Activated T-helper 1 cell treated with anti-CD3 and anti-CD28 coated beads, Interleukin-12 subunit alpha, Interleukin-12 subunit beta, Interleukin-2, Interleukin-4 antibody, amounts not matched to agents 30 ng/mL and 10 ng/mL and 1 ng/mL, durations not matched to agents 14 hours and 24 hours and 36 hours (primary cell): ENCODE measurements at regions of chr4 and their contacts with region 1.

Region 1: GRCh38 chr4:126784966-126785580 is 847.7 kb upstream of the INTU start:
- DNase-seq: no peak
- H3K4me3 Mint-ChIP-seq: no peak overlapping the region
- H3K27ac Mint-ChIP-seq: no peak overlapping the region
- H3K4me1 Mint-ChIP-seq: no peaks in the 10 kb centered on the region
- H3K27me3 Mint-ChIP-seq: no peaks in the 10 kb centered on the region

Region 2: GRCh38 chr4:125961626-125962025 is 823.4 kb before region 1 on chr4:
- intact Hi-C with region 1: no loop called
- DNase-seq: no peak
- H3K4me3 Mint-ChIP-seq: no peak overlapping the region
- H3K27ac Mint-ChIP-seq: no peak overlapping the region
- H3K4me1 Mint-ChIP-seq: no peaks in the 10 kb centered on the region
- H3K27me3 Mint-ChIP-seq: no peaks in the 10 kb centered on the region

Region 3: DNA sequence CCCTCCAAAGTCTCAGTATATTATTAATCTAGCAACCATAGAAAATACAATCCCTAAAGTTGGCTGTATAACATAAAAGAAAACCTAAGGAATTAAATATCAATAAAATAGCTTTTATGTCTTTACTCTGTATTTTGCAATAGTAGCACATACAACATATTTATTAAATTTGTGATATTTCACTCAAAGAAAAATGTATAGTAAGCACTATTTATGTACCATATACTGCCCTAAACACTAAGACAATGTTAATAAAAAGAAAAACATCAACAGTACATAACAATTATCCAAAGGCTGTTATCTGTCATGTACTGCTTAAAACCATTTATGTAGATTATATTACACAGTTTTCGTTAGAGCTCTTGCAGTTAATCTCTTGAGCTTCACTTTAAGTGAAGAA is 13.1 kb after region 1 on chr4:
- intact Hi-C with region 1: loop called (anchors 1 kb)
- DNase-seq: no peak
- H3K4me3 Mint-ChIP-seq: no peak overlapping the region
- H3K27ac Mint-ChIP-seq: no peak overlapping the region
- H3K4me1 Mint-ChIP-seq: no peaks in the 10 kb centered on the region
- H3K27me3 Mint-ChIP-seq: no peaks in the 10 kb centered on the region

Region 4: GRCh38 chr4:127660284-127660885 is 875.3 kb after region 1 on chr4:
- intact Hi-C with region 1: no loop called
- DNase-seq: no peak
- H3K4me3 Mint-ChIP-seq: no peak overlapping the region
- H3K27ac Mint-ChIP-seq: no peak overlapping the region
- H3K4me1 Mint-ChIP-seq: no peaks in the 10 kb centered on the region
- H3K27me3 Mint-ChIP-seq: peaks cover 1% of the 10 kb centered on the region